ENCODE measurements at regions of chr20 and their contacts with region 1.

Region 1: GRCh38 chr20:47785854-47786764 is 828 bp upstream of the SULF2 start:
- DNase-seq: peak; percentile 91
- H3K4me3 Mint-ChIP-seq: peak overlapping the region; percentile 84
- H3K27ac Mint-ChIP-seq: peak overlapping the region; percentile 88
- H3K4me1 Mint-ChIP-seq: peaks cover 38% of the 10 kb centered on the region
- H3K27me3 Mint-ChIP-seq: no peaks in the 10 kb centered on the region
- CTCF ChIP-seq: peak; percentile 93

Region 2: GRCh38 chr20:47343007-47343472 is 443.1 kb before region 1 on chr20:
- CTCF ChIA-PET with region 1: no interaction called
- intact Hi-C with region 1: no loop called
- DNase-seq: no peak
- H3K4me3 Mint-ChIP-seq: no peak overlapping the region
- H3K27ac Mint-ChIP-seq: no peak overlapping the region
- H3K4me1 Mint-ChIP-seq: peaks cover 28% of the 10 kb centered on the region
- H3K27me3 Mint-ChIP-seq: no peaks in the 10 kb centered on the region
- CTCF ChIP-seq: no peak

Region 3: DNA sequence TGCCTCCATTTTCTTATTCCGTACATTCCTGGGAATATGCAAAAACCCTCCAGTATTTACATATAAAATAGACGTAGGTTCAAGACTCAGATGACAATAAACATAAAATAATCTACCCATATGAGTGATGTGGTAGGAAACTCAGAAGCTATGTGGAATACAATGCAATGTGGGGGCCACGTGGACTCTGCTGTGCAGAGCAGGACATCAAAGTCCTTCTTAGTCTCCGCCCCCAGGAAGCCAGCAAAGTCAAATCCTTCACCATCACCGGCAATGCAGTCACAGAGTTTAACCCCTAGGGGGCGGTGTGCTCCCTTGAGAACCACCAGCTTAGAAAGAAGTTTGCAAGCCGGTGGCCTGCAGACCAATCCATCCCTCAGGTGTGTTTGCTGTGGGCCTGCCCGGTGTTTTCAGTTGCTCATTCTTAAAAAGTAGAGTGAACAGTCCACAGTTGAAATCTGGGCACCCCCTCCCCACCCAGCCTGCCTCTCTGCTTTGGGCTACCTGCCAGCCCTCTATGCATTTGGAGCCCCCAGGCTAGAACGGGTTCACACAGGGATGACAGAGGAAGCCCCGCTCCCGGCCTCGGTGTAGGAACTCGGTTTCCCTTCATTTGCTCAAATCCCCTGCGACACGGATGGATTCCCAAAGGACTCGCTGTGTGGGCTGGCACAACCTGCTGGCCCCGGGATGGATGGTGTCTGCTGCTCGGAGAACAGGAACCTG is 60.7 kb before region 1 on chr20:
- CTCF ChIA-PET with region 1: interaction called, 16 read pairs
- intact Hi-C with region 1: loop called (anchors 2 kb)
- DNase-seq: peak; percentile 93
- H3K4me3 Mint-ChIP-seq: no peak overlapping the region
- H3K27ac Mint-ChIP-seq: no peak overlapping the region
- H3K4me1 Mint-ChIP-seq: no peaks in the 10 kb centered on the region
- H3K27me3 Mint-ChIP-seq: no peaks in the 10 kb centered on the region
- CTCF ChIP-seq: peak; percentile 95

Region 4: DNA sequence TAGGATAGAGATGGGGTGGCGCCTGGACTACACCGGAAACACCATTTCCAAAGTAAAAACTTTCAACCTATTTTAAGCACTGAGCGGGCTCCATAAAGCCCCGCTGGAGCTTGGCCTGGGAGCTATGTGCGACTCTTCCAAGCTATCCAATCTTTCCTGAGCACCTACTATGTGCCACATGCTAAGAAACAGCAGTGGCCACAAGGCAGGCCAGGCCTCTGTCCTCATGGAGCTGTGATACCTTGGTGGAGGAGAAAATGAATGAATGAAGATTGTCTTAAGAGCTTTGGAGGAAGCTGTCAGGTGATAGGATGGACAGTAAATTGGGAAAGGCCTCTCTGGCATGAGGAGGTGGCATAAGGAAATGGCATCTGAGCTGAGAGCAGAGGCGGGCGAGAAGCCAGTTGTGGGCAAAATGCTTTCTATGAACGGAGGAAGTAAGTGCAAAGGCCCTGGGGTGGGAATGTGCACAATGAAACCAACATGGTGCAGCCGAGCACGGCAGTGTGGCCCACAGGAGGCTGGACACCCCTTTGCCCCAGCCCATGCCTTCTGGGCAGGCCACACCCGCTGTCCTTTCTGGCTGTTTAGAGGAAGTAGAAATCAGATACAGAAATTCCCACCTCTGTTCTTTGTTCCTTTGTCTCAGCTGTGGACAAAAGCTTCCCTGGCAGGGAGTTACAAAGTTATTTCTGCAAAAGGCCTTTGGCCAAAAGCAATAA is 13.0 kb before region 1 on chr20:
- CTCF ChIA-PET with region 1: interaction called, 13 read pairs
- intact Hi-C with region 1: no loop called
- DNase-seq: peak; percentile 73
- H3K4me3 Mint-ChIP-seq: peak overlapping the region; percentile 64
- H3K27ac Mint-ChIP-seq: peak overlapping the region; percentile 81
- H3K4me1 Mint-ChIP-seq: peaks cover 34% of the 10 kb centered on the region
- H3K27me3 Mint-ChIP-seq: no peaks in the 10 kb centered on the region
- CTCF ChIP-seq: no peak

Region 5: GRCh38 chr20:47857566-47858471 is 71.7 kb after region 1 on chr20:
- CTCF ChIA-PET with region 1: interaction called, 4 read pairs
- intact Hi-C with region 1: loop called (anchors 5 kb)
- DNase-seq: no peak
- H3K4me3 Mint-ChIP-seq: no peak overlapping the region
- H3K27ac Mint-ChIP-seq: peak overlapping the region; percentile 40
- H3K4me1 Mint-ChIP-seq: peaks cover 30% of the 10 kb centered on the region
- H3K27me3 Mint-ChIP-seq: peaks cover 2% of the 10 kb centered on the region
- CTCF ChIP-seq: no peak

Region 6: DNA sequence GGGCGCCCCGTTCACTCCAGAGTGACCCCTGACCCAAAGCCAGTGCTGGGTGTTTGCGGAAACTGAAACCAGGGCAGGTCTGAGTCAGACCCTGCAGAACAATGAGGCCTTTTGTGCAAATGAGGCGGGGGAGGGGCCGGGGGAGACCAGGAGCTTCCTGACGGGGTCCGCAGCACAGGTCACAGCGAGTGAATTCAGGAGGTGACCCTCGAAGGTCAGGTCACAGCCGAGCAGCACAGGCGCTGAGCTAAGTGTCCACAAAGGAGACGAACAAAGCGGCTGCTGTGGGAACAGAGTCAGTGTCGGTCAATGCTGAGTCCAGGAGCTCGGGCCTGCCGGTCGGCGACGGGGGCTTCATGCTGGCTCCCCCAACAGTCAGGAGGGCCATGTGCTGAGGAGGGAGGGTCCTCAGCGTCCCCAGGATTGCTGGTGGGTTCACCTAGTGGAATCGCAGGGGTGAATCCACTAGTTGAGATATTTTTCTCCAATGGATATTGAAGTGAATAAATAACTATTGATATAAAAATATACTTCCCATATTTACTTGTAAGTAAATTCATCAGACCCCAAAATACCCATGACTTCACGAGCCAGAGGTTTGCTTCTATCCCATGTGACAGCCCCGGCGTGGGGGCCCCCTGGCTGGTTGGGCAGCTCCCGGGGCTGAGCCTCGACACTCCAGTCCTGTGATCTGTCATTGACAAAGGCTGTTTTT is 187.6 kb after region 1 on chr20:
- CTCF ChIA-PET with region 1: interaction called, 14 read pairs
- intact Hi-C with region 1: loop called (anchors 10 kb)
- DNase-seq: peak; percentile 95
- H3K4me3 Mint-ChIP-seq: peak overlapping the region; percentile 65
- H3K27ac Mint-ChIP-seq: peak overlapping the region; percentile 99
- H3K4me1 Mint-ChIP-seq: peaks cover 63% of the 10 kb centered on the region
- H3K27me3 Mint-ChIP-seq: no peaks in the 10 kb centered on the region
- CTCF ChIP-seq: no peak

Region 7: GRCh38 chr20:48188657-48189551 is 402.8 kb after region 1 on chr20:
- CTCF ChIA-PET with region 1: interaction called, 8 read pairs
- intact Hi-C with region 1: loop called (anchors 2 kb)
- DNase-seq: peak; percentile 52
- H3K4me3 Mint-ChIP-seq: no peak overlapping the region
- H3K27ac Mint-ChIP-seq: no peak overlapping the region
- H3K4me1 Mint-ChIP-seq: peaks cover 16% of the 10 kb centered on the region
- H3K27me3 Mint-ChIP-seq: no peaks in the 10 kb centered on the region
- CTCF ChIP-seq: peak; percentile 53

Region 8: DNA sequence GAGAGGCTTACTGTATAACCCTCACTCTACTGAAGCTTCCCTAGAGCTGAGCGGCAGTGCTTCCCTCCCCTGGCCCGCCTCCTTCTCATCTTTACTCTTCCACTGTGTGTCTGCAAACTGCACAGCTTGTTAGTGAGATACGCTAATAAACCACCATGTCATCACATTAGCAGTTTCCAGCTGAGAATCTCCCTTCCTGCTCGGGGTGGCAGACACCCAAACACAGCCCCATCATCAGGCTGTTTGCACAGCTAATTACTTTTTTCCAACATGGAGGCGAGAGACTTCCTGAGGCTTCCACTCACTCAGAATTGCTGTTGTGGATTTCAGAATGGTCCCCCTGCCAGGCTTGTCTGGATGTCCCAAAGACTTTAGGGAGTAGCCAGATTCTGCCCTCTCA is 444.1 kb after region 1 on chr20:
- CTCF ChIA-PET with region 1: no interaction called
- intact Hi-C with region 1: no loop called
- DNase-seq: no peak
- H3K4me3 Mint-ChIP-seq: no peak overlapping the region
- H3K27ac Mint-ChIP-seq: no peak overlapping the region
- H3K4me1 Mint-ChIP-seq: no peaks in the 10 kb centered on the region
- H3K27me3 Mint-ChIP-seq: peaks cover 53% of the 10 kb centered on the region
- CTCF ChIP-seq: no peak

Measured in Calu3 (cell line).